Heart right ventricle (tissue), 16 donors: ENCODE measurements at regions of chr1 and their contacts with region 1.

Region 1: GRCh38 chr1:99533909-99534637 is 111.8 kb upstream of the PALMD start:
- DNase-seq: peak in 1 of 2 donors; percentile 22
- ATAC-seq: peak in 6 of 8 donors; percentile 39 to 77 (median 67)
- H3K4me3 ChIP-seq: peak overlapping the region in 5 of 10 donors; percentile 3 to 33 (median 6)
- H3K27ac ChIP-seq: peak overlapping the region in 9 of 10 donors; percentile 3 to 83 (median 63)
- H3K4me1 ChIP-seq: peaks cover 0 to 41% (median 19%) of the 10 kb centered on the region in 9 donors
- H3K27me3 ChIP-seq: no peaks in the 10 kb centered on the region
- CTCF ChIP-seq: no peak

Region 2: DNA sequence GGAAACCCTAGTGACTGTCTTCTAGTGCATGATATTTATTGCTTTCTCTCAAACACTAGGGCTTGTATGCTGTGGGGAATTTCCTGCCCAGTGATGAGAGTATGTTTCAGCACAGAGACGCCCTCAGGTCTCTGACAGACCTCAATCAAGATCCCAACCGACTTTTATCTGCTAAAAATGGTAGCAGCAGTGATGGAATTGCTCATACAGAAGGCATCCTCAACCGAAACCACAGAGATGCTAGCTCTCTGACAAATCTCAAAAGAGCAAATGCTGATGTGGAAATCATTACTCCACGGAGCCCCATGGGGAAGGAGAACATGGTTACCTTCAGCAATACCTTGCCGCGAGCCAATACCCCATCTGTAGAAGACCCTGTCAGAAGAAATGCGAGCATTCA is 228.4 kb before region 1 on chr1:
- intact Hi-C with region 1: no loop called
- DNase-seq: no peak
- ATAC-seq: no peak
- H3K4me3 ChIP-seq: no peak overlapping the region
- H3K27ac ChIP-seq: no peak overlapping the region
- H3K4me1 ChIP-seq: no peaks in the 10 kb centered on the region
- H3K27me3 ChIP-seq: no peaks in the 10 kb centered on the region
- CTCF ChIP-seq: no peak

Region 3: DNA sequence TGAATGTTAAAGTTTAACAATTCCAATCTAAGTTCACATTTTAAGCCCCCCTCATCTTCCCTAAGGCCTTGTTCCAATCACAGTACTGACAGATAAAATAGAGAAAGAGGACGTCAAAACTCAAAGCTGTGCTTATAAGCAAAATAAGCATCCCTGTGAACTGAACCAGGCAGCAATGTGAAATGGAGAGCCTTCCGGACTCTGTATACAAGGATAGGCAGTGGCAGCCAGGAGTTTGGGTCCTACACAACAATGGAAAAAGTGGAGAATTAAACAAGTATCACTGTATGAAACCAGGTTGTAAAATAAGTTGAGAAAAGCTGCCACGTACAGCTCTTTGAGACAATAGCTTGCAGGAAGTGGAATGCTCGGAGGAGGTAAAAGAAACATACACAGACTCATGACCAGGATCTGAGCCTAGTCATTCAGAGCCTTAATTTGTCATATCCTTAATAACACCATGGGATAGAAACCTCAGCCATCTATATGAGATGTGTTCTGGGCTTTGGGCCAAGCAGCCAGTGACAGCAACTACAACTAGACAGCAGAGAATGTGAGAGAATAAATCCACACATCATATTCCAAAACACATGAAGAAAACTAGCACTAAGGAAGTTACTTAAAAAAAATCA is 56.6 kb after region 1 on chr1:
- intact Hi-C with region 1: loop called in 3 of 10 experiments (anchors 5 to 10 kb)
- DNase-seq: peak; percentile 22 to 62
- ATAC-seq: peak; percentile 16 to 93 (median 81)
- H3K4me3 ChIP-seq: no peak overlapping the region
- H3K27ac ChIP-seq: peak overlapping the region in 8 of 10 donors; percentile 41 to 72 (median 54)
- H3K4me1 ChIP-seq: peaks cover 5 to 39% (median 16%) of the 10 kb centered on the region in 9 donors
- H3K27me3 ChIP-seq: no peaks in the 10 kb centered on the region
- CTCF ChIP-seq: no peak

Region 4: DNA sequence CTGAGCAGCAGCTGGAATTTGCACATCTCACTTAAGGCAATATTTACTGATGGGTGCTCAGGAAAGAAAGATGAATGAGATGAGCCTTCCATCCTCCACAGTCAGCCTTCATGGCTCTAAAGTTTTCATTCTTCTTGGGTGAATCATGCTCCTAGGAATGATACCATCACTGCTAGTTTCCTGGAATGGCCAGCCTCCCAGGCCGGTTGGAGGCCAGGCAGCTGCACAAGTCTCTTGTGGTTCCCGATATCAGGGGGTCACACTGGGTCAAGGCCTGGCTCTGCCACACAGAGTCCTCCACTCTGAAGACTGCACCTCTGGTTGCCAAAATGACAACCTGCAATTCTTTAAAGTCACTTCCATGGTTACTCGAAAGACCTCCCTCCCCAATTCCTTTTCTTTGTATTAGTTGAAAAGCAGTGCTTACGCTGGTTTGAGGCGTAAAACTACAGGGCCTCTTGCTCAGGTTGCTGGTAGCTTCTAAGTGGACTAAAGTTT is 65.7 kb after region 1 on chr1:
- intact Hi-C with region 1: loop called in 3 of 10 experiments (anchors 5 to 10 kb)
- DNase-seq: peak; percentile 12 to 48
- ATAC-seq: peak in 7 of 8 donors; percentile 41 to 87 (median 53)
- H3K4me3 ChIP-seq: no peak overlapping the region
- H3K27ac ChIP-seq: peak overlapping the region in 9 of 10 donors; percentile 11 to 72 (median 58)
- H3K4me1 ChIP-seq: peaks cover 2 to 63% (median 30%) of the 10 kb centered on the region in 9 donors
- H3K27me3 ChIP-seq: no peaks in the 10 kb centered on the region
- CTCF ChIP-seq: no peak

Region 5: DNA sequence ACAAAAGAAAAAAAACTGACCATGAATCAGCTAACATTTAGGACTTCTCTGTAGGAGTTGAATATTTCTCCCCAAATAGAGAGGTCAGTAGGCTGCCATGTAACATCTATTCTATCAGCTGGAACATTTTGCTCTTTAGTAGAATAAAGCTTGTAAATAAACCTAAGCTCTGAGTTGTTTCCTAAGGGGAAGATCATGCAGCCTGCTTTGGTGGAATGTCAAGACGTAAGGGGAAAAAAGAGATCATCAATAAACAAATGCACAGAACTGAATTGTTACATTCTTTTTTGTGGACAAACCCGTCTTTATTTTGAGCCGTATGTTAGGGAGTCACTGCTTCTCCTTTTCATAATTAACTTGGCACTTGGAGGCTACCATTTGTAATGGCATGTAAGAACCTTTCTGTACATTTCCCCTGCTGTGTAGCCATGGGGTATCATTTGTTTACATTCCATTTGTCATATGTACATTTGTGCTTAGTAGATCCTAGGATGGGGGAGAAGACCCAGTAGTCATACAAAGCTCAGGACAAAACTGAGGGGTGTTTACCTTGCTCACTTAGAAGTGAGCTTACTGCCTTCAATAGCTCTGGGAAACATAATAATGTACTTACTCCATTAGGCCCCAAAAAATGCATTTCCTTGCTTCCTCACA is 101.0 kb after region 1 on chr1:
- intact Hi-C with region 1: loop called in 2 of 10 experiments (anchors 5 to 10 kb)
- DNase-seq: no peak
- ATAC-seq: no peak
- H3K4me3 ChIP-seq: no peak overlapping the region
- H3K27ac ChIP-seq: peak overlapping the region in 5 of 10 donors; percentile 3 to 68 (median 14)
- H3K4me1 ChIP-seq: peaks cover 0 to 54% (median 14%) of the 10 kb centered on the region in 9 donors
- H3K27me3 ChIP-seq: no peaks in the 10 kb centered on the region
- CTCF ChIP-seq: no peak

Region 6: DNA sequence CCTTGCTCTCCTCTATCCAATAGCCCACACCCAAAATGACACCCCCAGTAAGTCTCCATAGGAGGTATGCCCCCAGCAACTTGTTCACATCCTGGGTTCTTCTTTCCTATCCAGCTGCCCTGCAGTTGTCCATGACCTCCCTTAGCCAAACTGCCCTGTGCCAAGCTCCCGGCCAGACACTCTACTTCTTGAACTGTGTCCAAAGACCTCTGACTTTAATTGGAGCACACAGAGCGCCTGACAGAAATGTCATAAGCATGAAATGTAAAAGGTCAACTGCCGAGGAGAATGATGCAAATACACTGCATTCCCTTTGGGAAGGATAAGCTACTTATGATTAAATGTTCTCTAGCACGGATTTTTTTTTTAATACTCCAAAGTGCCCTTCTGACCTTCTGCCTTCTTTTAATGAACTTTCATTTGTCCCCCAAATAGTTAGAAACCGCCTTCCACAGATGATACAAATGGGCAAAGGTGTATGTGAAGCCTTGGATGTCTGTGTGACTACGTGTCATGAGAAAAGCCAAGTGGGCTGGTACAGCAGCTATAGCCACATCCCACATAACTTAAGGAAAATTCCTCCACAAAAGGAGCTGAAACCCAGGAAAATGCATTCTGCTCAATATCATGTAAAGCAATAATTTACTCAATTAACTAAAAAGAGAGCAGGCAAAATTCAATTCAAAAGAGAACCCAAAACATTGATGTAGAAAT is 138.6 kb after region 1 on chr1:
- intact Hi-C with region 1: loop called in 1 of 10 experiments (anchors 10 kb)
- DNase-seq: peak; percentile 38 to 70
- ATAC-seq: peak; percentile 59 to 90 (median 85)
- H3K4me3 ChIP-seq: no peak overlapping the region
- H3K27ac ChIP-seq: peak overlapping the region; percentile 51 to 99 (median 79)
- H3K4me1 ChIP-seq: peaks cover 6 to 99% (median 83%) of the 10 kb centered on the region in 9 donors
- H3K27me3 ChIP-seq: no peaks in the 10 kb centered on the region
- CTCF ChIP-seq: no peak

Region 7: DNA sequence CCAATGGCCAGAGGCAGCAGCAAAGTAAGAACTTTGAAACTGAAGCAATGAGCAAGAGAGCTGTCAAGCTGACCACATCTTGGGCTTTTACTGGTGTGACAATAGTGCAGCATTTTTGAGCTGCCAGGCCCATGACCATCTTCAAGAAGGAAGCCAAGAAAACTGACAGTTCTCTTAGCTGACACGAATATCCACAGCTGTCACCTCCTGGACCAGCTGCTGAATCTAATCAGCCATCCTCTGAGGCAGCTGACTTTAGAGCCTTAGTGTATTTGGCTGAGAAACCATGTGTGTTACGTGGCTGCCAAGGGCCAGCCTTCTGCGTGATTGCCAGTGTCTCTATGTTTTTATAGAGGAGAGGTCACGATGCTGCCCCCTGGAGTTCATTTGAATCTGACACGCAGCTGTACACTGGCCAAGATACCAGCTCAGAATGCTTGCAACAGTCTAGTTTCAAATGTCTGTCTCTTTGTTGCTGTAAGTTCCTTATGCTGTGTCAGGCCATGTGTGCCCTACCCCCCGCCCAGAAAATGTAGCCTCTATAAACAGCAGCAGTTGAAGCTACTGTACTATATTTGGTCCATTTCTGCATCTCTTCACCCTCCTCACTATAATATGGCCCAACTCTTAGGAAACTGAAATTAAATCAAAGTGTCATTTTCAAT is 151.6 kb after region 1 on chr1:
- intact Hi-C with region 1: loop called in 1 of 10 experiments (anchors 5 kb)
- DNase-seq: peak; percentile 68 to 88
- ATAC-seq: peak; percentile 91 to 95 (median 93)
- H3K4me3 ChIP-seq: no peak overlapping the region
- H3K27ac ChIP-seq: peak overlapping the region; percentile 1 to 83 (median 62)
- H3K4me1 ChIP-seq: peaks cover 7 to 72% (median 43%) of the 10 kb centered on the region in 9 donors
- H3K27me3 ChIP-seq: no peaks in the 10 kb centered on the region
- CTCF ChIP-seq: peak; percentile 49 to 76 (median 69)